ENCODE measurements at regions of chr13 and their contacts with region 1.

Region 1: GRCh38 chr13:27636589-27637288 is 15.0 kb downstream of the POLR1D start:
- DNase-seq: no peak
- H3K4me3 ChIP-seq: no peak overlapping the region
- H3K27ac ChIP-seq: no peak overlapping the region
- H3K4me1 ChIP-seq: no peaks in the 10 kb centered on the region
- H3K27me3 ChIP-seq: no peaks in the 10 kb centered on the region
- CTCF ChIP-seq: no peak
- EP300 ChIP-seq: no peak
- POLR2A ChIP-seq: no peak
- RAD21 ChIP-seq: no peak

Region 2: DNA sequence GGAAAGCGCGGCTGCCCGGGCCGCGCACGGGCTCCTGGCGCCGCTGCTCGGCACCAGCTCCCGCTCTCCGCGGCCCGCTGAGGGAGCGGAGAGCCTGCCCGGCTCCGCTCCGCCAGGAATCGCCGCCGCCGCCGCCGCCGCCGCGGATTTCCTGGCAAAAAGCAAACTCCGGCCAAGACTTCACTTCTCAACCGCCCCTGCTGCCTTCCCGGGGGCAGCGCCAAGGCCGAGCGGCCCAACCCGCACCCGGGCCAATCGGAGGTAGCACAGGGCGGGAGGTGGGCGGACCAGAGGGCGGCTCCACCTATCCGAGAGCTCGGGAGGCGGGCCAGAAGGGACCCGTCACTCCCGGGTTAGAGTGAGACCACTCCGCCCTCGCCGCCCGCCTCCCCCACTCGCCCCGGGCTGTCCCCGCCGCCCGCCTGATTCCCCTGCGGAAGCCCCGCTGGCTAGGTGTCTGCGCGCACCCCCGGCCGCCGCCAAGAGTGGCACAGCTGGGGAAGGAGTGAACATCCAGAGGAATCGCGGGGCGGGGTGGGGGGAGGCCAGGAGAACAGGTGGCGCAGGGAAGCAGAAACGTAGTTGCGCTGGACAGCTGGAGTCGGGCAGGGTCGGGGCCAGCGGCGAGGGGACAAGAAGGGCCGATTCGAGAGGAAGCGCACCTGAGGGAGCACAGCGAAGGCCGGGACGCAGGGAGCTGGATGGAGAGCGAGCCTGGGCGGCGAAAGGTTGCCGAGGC is 16.2 kb before region 1 on chr13 and contains the start of gene LNX2:
- CTCF ChIA-PET with region 1: interaction called, 7 read pairs
- POLR2A ChIA-PET with region 1: interaction called, 26 read pairs
- DNase-seq: peak; percentile 88 to 97
- H3K4me3 ChIP-seq: peak within 1 kb of the TSS; percentile 81 to 97 (median 93)
- H3K27ac ChIP-seq: peak within 1 kb of the TSS; percentile 93
- H3K4me1 ChIP-seq: peaks cover 3 to 9% (median 7%) of the 10 kb centered on the region in 4 experiments; a peak in 6 of 7 replicates
- H3K27me3 ChIP-seq: no peaks in the 10 kb centered on the region
- CTCF ChIP-seq: no peak; a peak in 1 of 4 replicates
- EP300 ChIP-seq: peak in 1 of 2 experiments; percentile 35; a peak in 1 of 3 replicates
- POLR2A ChIP-seq: no peak
- RAD21 ChIP-seq: no peak
- total RNA-seq, gene LNX2: 12.3 and 13.9 TPM in 2 replicates

Measured in H1 (cell line).